Dorsolateral prefrontal cortex (tissue), 120 donors: ENCODE measurements at regions of chr1 and their contacts with region 1.

Region 1: GRCh38 chr1:157090196-157090647 is 9.4 kb downstream of the ETV3L start:
- DNase-seq: peak; percentile 73 to 90 (median 85)
- H3K4me3 ChIP-seq: peak overlapping the region in 1 of 59 donors; percentile 19
- H3K27ac ChIP-seq: no peak overlapping the region
- H3K27me3 ChIP-seq: no peaks in the 10 kb centered on the region
- CTCF ChIP-seq: peak; percentile 82 to 99 (median 96)

Region 2: DNA sequence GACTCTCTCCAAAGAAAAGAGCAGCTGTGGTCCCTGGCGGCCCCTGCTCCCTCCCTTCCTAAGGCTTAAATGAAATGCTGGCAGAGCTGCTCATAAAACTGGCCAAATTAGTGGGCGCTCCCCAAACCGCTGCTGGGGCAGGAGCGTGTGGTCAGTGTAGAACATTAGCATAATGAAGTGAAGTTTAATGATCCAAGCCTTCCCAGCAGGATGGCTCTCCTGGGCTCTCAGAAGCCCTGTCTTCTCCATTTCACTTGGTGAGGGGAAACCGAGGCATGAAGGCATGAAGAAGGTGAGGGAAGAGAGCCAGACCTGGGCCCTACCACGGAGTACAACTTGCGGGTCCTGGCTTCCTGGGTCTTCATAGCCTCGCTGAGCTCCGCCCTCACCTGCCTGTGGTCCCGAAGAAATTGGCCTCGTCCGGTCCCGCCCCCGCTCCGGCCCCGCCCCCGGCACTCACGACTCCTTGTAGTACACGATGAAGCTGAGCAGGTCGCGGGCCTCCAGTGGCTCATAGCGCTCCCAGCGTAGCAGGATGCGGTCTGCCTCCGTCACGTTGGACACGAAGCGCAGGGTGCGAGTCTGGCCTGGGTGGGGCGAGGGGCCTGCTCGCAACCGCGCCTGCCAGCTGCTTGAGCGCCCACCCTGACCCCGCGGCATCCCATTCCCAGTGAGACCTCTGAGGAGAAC is 241.6 kb before region 1 on chr1:
- intact Hi-C with region 1: no loop called
- DNase-seq: no peak
- H3K4me3 ChIP-seq: no peak overlapping the region
- H3K27ac ChIP-seq: no peak overlapping the region
- H3K27me3 ChIP-seq: peaks cover 0 to 61% (median 39%) of the 10 kb centered on the region in 45 donors
- CTCF ChIP-seq: no peak

Region 3: DNA sequence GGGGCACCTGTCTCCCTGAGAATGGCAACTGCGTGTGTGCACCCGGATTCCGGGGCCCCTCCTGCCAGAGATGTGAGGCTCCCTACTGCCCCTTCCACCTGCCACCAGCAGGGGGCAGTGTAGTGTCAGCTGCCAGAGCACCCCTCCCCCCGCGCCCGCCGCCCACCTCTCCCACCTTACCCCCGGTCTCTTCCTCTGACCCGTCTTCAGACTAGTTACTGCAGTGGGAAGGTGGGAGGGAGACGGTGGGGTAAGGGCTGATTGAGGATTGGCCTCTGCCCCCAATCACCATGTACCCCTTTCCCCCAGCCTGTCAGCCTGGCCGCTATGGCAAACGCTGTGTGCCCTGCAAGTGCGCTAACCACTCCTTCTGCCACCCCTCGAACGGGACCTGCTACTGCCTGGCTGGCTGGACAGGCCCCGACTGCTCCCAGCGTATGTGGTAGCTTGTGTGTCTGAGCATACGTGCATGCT is 179.9 kb before region 1 on chr1:
- intact Hi-C with region 1: loop called in 1 of 2 experiments (anchors 10 kb)
- DNase-seq: peak in 2 of 10 donors; percentile 26 to 39
- H3K4me3 ChIP-seq: no peak overlapping the region
- H3K27ac ChIP-seq: no peak overlapping the region
- H3K27me3 ChIP-seq: peaks cover 0 to 71% (median 37%) of the 10 kb centered on the region in 45 donors
- CTCF ChIP-seq: peak; percentile 50 to 90 (median 78)

Region 4: GRCh38 chr1:156961709-156962108 is 128.5 kb before region 1 on chr1:
- intact Hi-C with region 1: no loop called
- DNase-seq: no peak
- H3K4me3 ChIP-seq: no peak overlapping the region
- H3K27ac ChIP-seq: no peak overlapping the region
- H3K27me3 ChIP-seq: no peaks in the 10 kb centered on the region
- CTCF ChIP-seq: peak in 6 of 56 donors; percentile 6 to 21 (median 12)

Region 5: DNA sequence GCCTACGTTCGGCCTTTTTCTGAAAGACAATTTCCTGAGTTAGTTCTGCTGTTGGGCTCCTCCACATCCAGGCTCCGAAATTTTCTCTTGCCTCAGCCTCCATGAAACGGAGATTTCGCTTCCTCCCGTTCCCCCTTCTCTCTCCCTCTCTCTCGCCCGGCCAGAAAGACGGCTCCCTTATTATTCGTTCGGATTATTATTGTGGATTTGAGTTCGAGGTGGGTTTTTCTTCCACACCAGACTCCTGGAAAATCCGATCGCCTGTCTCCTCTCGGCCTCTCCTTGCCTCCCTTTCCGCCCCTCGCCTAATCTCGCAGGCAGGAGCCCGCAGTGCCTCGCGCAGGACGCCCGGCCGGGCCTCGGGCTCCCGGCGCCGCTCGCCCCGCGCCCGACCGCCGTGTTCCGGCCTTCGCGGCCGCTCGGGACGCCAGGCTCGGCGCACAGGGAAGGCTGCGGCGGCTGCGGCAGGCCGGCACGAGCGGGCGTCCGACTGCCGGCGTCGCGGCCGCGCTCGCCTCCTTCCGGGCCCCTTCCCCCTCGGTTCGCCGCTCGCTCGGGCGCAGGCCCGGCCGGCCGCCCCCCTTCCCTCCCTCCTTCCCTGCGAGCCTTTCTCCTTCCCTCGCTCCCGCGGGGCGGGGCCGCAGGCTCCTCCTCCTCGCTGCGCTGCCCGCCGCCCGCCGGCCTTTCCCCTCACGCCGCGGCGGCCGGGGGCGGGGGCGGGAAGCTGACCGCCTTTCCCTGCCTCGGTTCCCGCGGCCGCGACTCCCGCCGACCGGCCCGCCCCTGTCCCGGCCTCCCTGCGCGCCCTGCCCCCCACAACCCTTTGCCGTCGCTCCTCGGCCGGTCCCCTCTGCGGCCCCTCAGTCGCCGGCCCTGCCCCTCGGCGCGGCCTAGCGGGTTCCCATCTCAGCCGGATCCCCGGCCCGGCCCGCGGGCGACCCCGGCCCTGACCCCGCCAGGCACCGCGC is 44.7 kb before region 1 on chr1 and contains the start of gene ARHGEF11:
- intact Hi-C with region 1: no loop called
- DNase-seq: peak; percentile 66 to 94 (median 88)
- H3K4me3 ChIP-seq: peak within 1 kb of the TSS; percentile 47 to 89 (median 73)
- H3K27ac ChIP-seq: peak within 1 kb of the TSS in 57 of 59 donors; percentile 45 to 95 (median 86)
- H3K27me3 ChIP-seq: no peaks in the 10 kb centered on the region
- CTCF ChIP-seq: peak in 13 of 56 donors; percentile 8 to 48 (median 16)
- total RNA-seq, gene ARHGEF11: 42.3 to 101 (median 74.9) TPM

Region 6: GRCh38 chr1:157156058-157156541 is 65.9 kb after region 1 on chr1:
- intact Hi-C with region 1: loop called (anchors 1 kb)
- DNase-seq: peak in 9 of 10 donors; percentile 53 to 80 (median 66)
- H3K4me3 ChIP-seq: peak overlapping the region in 23 of 59 donors; percentile 2 to 43 (median 23)
- H3K27ac ChIP-seq: peak overlapping the region in 7 of 59 donors; percentile 0 to 62 (median 34)
- H3K27me3 ChIP-seq: no peaks in the 10 kb centered on the region
- CTCF ChIP-seq: peak; percentile 78 to 99 (median 98)